MCF 10A (cell line): ENCODE measurements at regions of chrX and their contacts with region 1.

Region 1: GRCh38 chrX:131752489-131753198 is 208.8 kb downstream of the OR13H1 start:
- DNase-seq: peak; percentile 93
- H3K4me3 Mint-ChIP-seq: peak overlapping the region; percentile 72
- H3K27ac Mint-ChIP-seq: peak overlapping the region; percentile 61
- H3K4me1 Mint-ChIP-seq: peaks cover under 1% of the 10 kb centered on the region
- H3K27me3 Mint-ChIP-seq: no peaks in the 10 kb centered on the region
- CTCF ChIP-seq: no peak

Region 2: DNA sequence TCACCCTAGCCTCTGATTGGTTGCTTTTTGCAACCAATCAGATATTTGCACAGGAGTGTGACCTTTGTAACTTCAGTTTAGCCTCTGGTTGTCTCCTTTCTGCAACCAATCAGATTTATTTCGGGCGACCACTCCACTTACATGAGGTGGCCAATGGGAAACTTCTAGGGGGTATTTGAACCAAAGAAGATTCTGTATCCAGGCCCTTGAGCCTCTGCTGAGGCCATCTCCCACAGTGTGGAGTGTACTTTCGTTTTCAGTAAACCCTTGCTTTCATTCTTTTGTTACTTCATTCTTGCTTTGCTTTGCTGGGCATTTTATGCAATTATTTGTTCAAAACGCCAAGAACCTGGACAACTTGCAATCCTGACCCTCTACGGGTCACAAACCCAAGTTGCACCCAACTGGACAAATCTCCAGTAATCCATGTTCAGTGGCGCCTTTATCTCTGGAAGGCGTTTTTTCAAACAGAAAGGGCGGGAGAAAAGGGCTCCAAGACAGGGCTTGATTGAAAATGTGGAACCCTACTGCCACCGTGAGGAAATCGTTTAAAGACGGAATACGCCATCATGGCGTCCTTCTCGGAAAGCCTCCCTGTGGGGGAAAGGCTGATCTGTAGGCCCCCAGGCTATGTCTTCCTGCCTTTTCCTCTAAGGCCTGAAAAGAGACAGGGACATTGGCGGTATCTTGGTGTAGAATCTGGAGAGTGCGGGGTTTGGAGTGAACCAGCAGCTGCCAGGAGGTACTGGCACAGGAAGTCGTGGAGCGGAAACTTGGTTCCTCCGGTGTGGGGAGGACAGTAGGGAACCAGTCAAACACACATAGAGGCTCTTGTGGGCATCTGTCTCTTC is 24.1 kb before region 1 on chrX:
- CTCF ChIA-PET with region 1: interaction called, 3 read pairs
- POLR2A ChIA-PET with region 1: no interaction called
- intact Hi-C with region 1: loop called (anchors 1 kb)
- DNase-seq: peak; percentile 93
- H3K4me3 Mint-ChIP-seq: peak overlapping the region; percentile 85
- H3K27ac Mint-ChIP-seq: peak overlapping the region; percentile 98
- H3K4me1 Mint-ChIP-seq: no peaks in the 10 kb centered on the region
- H3K27me3 Mint-ChIP-seq: no peaks in the 10 kb centered on the region
- CTCF ChIP-seq: peak; percentile 52

Region 3: GRCh38 chrX:131869182-131869581 is 116.5 kb after region 1 on chrX:
- CTCF ChIA-PET with region 1: no interaction called
- POLR2A ChIA-PET with region 1: no interaction called
- intact Hi-C with region 1: no loop called
- DNase-seq: no peak
- H3K4me3 Mint-ChIP-seq: no peak overlapping the region
- H3K27ac Mint-ChIP-seq: no peak overlapping the region
- H3K4me1 Mint-ChIP-seq: no peaks in the 10 kb centered on the region
- H3K27me3 Mint-ChIP-seq: peaks cover 43% of the 10 kb centered on the region
- CTCF ChIP-seq: no peak